HEK293 (cell line): ENCODE measurements at regions of chr1 and their contacts with region 1.

Region 1: GRCh38 chr1:11645670-11646265 is 8.5 kb downstream of the FBXO2 start:
- H3K4me3 ChIP-seq: no peak overlapping the region
- H3K27ac ChIP-seq: no peak overlapping the region
- H3K4me1 ChIP-seq: no peaks in the 10 kb centered on the region
- CTCF ChIP-seq: peak; percentile 57

Region 2: DNA sequence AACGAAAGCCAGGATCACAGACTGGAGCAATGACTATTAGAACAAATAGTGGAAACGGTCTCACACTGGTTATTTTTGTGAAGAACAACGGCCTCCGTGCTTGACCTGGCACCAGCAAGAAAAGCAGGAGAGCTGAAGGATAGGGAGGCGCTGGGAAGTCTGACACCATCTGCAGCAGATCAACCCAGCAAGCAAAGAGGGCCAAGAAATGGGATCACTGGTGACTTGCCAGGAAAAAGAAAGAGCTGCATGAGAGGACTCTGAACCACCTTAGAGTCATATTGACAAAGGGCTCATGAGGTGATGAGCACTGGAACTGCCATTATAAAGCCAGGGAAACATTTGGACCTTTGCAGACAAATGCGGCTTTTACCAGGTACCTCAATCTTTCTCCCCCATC is 408.4 kb before region 1 on chr1:
- CTCF ChIA-PET with region 1: interaction called, 35 read pairs
- POLR2A ChIA-PET with region 1: no interaction called
- H3K4me3 ChIP-seq: no peak overlapping the region
- H3K27ac ChIP-seq: no peak overlapping the region
- H3K4me1 ChIP-seq: no peaks in the 10 kb centered on the region
- CTCF ChIP-seq: no peak

Region 3: DNA sequence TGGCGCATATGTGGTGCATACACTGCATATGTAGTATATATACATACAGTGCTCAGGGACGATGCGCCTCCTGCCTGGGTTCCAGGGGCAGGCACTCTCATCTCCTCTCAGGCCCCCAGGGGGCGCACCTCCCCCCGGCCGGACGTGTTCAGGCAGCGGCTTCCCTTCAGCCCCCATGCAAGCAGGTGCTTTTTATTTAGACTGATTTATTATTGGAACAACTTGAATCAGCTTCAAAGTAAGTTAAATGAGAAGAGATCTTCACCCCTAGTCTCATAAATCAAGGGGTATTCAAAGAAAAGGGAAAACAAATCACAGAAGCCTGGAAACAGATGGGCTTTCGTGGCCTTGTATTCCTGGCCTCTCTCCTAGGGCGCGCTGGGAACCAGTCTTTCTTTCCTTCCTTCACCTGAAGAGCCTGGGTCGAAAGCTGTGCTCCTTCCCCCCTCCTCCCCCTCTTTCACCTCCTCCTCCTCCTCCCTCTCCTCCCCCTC is 308.1 kb before region 1 on chr1:
- CTCF ChIA-PET with region 1: interaction called, 17 read pairs
- POLR2A ChIA-PET with region 1: no interaction called
- H3K4me3 ChIP-seq: no peak overlapping the region
- H3K27ac ChIP-seq: no peak overlapping the region
- H3K4me1 ChIP-seq: no peaks in the 10 kb centered on the region
- CTCF ChIP-seq: peak; percentile 72

Region 4: GRCh38 chr1:11598461-11598860 is 47.3 kb before region 1 on chr1:
- CTCF ChIA-PET with region 1: no interaction called
- POLR2A ChIA-PET with region 1: no interaction called
- H3K4me3 ChIP-seq: no peak overlapping the region
- H3K27ac ChIP-seq: no peak overlapping the region
- H3K4me1 ChIP-seq: no peaks in the 10 kb centered on the region
- CTCF ChIP-seq: no peak

Region 5: DNA sequence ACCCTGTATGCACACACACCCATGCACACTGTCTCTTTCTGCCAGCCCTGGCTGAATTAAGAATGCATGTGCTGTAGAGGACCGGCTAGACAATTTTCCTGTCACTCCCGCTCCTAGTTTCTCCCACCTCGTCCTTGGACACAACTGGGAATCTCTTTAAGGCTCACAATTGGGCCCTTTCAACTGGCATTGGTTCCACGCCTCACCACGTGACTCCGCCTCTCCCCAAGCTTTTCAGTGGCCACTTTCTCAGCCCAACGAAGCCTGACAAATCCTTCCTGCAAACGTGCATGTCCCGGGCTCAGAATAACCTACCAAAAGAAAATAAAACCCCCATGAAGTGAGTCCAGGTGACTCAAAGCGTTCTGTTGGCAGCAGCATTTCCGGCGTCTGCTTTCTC is 25.4 kb before region 1 on chr1:
- CTCF ChIA-PET with region 1: no interaction called
- POLR2A ChIA-PET with region 1: no interaction called
- H3K4me3 ChIP-seq: no peak overlapping the region
- H3K27ac ChIP-seq: no peak overlapping the region
- H3K4me1 ChIP-seq: no peaks in the 10 kb centered on the region
- CTCF ChIP-seq: no peak

Region 6: GRCh38 chr1:11661103-11661502 is 15.3 kb after region 1 on chr1:
- CTCF ChIA-PET with region 1: interaction called, 12 read pairs
- POLR2A ChIA-PET with region 1: interaction called, 11 read pairs
- H3K4me3 ChIP-seq: no peak overlapping the region
- H3K27ac ChIP-seq: no peak overlapping the region
- H3K4me1 ChIP-seq: no peaks in the 10 kb centered on the region
- CTCF ChIP-seq: no peak

Region 7: GRCh38 chr1:11719313-11720032 is 73.7 kb after region 1 on chr1:
- CTCF ChIA-PET with region 1: interaction called, 38 read pairs
- POLR2A ChIA-PET with region 1: no interaction called
- H3K4me3 ChIP-seq: peak overlapping the region; percentile 11
- H3K27ac ChIP-seq: no peak overlapping the region
- H3K4me1 ChIP-seq: no peaks in the 10 kb centered on the region
- CTCF ChIP-seq: peak; percentile 93

Region 8: DNA sequence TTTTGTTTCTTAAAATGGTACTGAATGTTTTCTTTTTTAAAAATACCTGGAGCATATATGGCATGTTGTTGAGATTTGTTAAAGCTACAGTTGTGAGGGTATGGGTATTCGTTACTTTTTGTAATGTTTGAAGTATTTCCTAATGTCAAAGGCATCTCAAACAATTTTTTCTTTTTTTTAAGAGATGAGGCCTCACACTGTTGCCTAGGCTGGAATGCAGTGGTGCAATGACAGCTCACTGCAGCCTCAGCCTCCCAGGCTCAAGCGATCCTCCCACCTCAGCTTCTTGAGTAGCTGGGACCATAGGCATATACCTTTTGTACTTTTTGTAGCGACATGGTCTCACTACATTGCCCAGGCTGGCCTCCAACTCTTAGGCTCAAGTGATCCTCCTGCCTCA is 176.3 kb after region 1 on chr1:
- CTCF ChIA-PET with region 1: no interaction called
- POLR2A ChIA-PET with region 1: no interaction called
- H3K4me3 ChIP-seq: no peak overlapping the region
- H3K27ac ChIP-seq: no peak overlapping the region
- H3K4me1 ChIP-seq: no peaks in the 10 kb centered on the region
- CTCF ChIP-seq: no peak

Region 9: DNA sequence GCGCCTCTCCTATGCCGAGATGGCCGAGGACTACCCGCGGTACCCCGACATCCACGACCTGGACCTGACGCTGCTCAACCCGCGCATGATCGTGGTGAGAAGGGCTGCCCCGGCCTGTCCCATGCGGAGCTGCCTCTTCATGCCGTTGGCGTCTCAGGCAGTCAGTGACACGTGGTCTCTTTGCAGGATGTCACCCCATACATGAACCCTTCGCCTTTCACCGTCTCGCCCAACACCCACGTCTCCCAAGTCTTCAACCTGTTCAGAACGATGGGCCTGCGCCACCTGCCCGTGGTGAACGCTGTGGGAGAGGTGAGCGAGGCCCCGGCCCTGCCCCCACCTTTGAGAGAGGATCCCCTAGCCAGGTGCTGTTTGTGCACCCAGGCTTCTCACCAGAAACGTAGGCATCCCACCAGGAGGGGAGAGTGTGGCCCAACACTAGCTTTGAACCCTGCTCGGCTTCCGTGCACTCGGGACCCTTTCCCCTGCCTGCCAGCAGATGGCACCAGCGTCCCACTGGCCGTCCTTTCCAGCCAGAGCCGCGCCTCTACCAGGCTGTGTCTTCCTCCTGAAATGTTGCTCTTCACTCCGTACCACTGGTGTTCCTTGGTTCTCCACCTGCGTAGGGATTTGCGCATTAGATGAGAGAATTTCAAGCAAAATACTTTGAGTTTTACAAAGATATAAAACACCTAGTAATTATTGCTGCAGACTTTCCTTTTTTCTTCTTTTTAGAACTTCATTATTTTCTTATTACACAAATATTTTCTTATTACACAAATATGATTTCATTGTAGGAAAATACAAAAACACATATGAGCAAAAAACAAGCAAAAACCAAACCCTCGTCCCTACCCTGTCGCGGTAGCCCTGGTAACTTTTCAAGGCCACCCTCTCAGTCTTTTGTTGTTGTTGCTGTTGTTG is 192.8 kb after region 1 on chr1:
- CTCF ChIA-PET with region 1: no interaction called
- POLR2A ChIA-PET with region 1: no interaction called
- H3K4me3 ChIP-seq: no peak overlapping the region
- H3K27ac ChIP-seq: no peak overlapping the region
- H3K4me1 ChIP-seq: no peaks in the 10 kb centered on the region
- CTCF ChIP-seq: peak; percentile 95